Astrocyte of the cerebellum (primary cell): ENCODE measurements at regions of chr21 and their contacts with region 1.

Region 1: GRCh38 chr21:25801217-25802014 is 66.6 kb downstream of the GABPA start:
- DNase-seq: peak; percentile 53
- H3K4me3 ChIP-seq: no peak overlapping the region
- CTCF ChIP-seq: peak; percentile 93

Region 2: GRCh38 chr21:25845729-25846256 is 44.4 kb after region 1 on chr21:
- in situ Hi-C with region 1: no loop called
- DNase-seq: no peak
- H3K4me3 ChIP-seq: no peak overlapping the region
- CTCF ChIP-seq: no peak

Region 3: DNA sequence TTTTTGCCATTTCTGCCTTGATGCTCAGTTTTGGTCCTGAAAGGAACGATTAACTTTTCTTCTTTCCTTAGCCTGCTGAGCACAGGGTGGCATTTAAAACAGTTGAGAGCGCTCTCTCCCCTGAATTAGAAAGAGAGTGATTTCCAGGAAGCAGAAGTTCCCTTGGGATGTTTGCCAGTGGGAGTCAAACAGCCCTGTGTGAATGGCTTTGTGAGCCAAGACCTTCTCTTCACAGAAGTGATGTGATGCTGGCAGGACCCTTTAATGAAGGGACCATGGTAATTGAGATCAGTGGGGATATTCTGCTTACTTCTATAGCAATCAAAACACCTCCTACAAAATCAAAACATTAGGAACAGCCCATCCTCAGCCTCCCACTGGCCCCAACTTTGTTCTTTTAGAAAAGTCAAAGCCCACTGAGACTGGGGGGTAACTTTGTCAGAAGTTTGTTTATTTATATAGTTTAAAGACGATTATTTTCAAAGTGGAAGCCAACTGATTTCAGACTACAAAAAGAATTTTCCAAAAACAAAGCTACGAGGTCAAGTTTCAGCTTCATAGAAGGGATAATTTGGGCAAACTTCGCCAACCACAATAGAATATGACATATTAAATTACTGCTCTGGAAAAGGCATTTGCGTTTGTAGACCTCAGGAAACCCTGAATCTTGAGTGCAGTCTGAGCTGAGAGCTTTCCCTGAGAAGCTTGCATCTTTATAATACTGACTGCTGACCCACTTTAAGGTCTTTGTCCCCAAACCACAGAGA is 56.1 kb after region 1 on chr21:
- in situ Hi-C with region 1: loop called (anchors 5 kb)
- DNase-seq: peak; percentile 23
- H3K4me3 ChIP-seq: no peak overlapping the region
- CTCF ChIP-seq: no peak

Region 4: GRCh38 chr21:25895565-25896205 is 94.3 kb after region 1 on chr21:
- in situ Hi-C with region 1: no loop called
- DNase-seq: no peak
- H3K4me3 ChIP-seq: no peak overlapping the region
- CTCF ChIP-seq: peak; percentile 57